Calu3 (cell line): ENCODE measurements at regions of chr2 and their contacts with region 1.

Region 1: DNA sequence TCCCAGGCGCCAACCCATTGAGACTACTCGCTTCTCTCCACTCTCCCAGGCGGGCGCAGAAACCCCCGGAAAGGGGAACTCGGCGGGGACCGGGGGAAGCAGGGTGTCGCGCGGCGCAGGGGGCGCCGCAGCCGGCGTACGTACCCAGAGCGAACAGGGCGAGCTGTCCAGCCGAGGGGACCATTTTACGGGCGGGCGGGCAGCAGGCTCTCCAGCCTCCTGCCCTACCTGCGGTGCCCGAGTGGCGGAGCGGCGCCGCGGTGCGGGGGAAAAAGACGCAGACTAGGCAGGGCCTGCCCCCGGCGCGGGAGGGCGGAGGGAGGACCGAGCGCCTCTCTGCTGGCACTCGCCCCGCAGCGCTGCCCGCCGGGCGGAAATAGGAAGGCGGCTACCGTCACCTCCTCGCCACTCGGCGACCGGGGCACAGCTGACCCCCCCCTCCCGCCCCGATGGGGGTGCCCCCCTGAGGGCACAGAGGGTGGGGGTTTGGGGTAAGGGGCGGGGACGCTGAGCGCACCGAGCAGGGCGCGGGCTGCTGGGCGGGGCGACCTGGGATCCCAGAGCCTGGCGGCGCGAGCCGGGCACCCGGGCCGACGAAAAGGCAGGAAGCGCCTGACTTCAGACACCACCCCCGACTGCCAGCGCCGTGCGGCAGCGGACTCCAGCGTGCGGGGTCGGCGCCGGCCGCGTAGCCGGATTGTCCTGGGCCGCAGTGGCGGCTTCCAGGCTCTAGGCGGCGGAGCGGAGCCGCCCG is at the start of gene TGFA:
- DNase-seq: peak; percentile 96
- H3K4me3 Mint-ChIP-seq: peak within 1 kb of the TSS; percentile 99
- H3K27ac Mint-ChIP-seq: peak within 1 kb of the TSS; percentile 95
- H3K4me1 Mint-ChIP-seq: peaks cover 39% of the 10 kb centered on the region
- H3K27me3 Mint-ChIP-seq: no peaks in the 10 kb centered on the region
- CTCF ChIP-seq: no peak
- total RNA-seq, gene TGFA: 80.0 and 104 TPM in 2 replicates

Region 2: DNA sequence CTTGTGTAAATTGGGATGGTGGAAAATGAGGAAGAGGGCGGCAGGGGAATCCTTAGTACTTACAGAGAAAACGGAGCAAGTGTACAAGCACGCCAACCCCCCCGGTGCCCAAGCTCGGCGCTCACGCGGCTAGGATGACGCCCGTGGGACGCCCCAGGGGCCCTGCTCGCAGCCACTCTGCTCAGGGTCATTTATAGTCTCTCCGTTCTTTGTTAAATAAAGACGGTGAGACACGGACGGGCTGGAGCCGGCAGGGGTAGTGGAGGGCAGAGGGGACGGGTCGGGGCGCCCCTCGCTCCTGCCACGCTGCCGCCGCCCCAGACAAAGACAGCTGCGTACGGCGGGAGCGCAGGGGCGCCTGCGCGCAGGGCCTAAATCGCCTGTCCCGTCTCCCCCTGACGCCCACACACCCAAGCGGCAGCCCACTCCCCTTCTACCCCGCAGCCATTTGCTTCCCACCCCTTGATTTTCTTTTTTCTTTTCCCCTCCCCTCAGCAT is 428.7 kb before region 1 on chr2:
- CTCF ChIA-PET with region 1: no interaction called
- intact Hi-C with region 1: no loop called
- DNase-seq: no peak
- H3K4me3 Mint-ChIP-seq: peak overlapping the region; percentile 81
- H3K27ac Mint-ChIP-seq: peak overlapping the region; percentile 98
- H3K4me1 Mint-ChIP-seq: peaks cover 40% of the 10 kb centered on the region
- H3K27me3 Mint-ChIP-seq: no peaks in the 10 kb centered on the region
- CTCF ChIP-seq: no peak

Region 3: GRCh38 chr2:70509553-70509952 is 44.2 kb before region 1 on chr2:
- CTCF ChIA-PET with region 1: interaction called, 9 read pairs
- intact Hi-C with region 1: loop called (anchors 1 kb)
- DNase-seq: peak; percentile 82
- H3K4me3 Mint-ChIP-seq: peak overlapping the region; percentile 57
- H3K27ac Mint-ChIP-seq: peak overlapping the region; percentile 97
- H3K4me1 Mint-ChIP-seq: peaks cover 72% of the 10 kb centered on the region
- H3K27me3 Mint-ChIP-seq: no peaks in the 10 kb centered on the region
- CTCF ChIP-seq: no peak

Region 4: DNA sequence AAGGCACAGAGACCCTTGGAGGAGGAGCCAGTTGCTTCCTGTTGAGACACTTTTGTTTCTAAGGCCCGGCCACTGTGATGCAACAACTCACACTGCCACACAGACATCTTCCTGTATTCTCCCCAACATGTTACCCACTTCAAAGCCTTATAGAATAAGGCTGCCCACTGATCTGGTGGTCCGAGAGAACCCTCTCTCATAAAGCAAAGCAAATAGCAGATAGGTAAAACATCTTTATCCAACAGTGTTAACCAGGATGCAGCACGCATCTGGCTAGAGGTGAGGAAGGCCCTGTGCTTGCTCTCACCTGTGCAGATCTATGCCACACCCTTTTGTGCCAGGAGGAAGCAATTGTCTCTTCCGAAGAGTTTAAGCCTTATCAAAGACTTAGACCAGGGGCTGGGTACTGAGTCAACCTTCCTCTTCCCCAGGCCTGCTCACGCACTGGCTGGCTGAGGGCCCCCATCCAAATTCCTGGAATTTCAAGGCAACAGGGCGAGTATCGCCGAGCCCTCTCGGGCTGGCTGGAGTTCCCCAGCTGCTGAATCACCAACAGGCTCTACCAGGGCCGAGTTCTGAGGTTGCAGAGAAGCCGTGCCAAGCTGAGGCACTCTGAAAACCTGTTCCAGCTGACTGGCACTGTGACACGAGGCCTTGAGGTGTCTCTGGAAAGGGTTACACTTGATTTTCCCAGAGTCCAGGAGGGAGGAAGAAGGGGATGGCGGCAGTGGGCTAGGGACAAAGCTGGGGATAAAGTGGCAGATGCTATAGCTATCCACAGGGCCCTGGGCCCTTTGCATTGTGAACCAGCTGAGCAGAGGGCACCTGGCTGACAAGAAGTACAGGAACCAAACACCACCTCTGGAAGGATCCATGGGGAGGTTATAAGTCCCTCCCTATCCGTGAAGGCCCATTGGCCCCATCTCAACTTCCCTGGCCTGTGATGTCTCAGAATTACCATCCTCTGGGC is 29.5 kb before region 1 on chr2:
- CTCF ChIA-PET with region 1: interaction called, 6 read pairs
- intact Hi-C with region 1: loop called (anchors 2 kb)
- DNase-seq: peak; percentile 91
- H3K4me3 Mint-ChIP-seq: peak overlapping the region; percentile 54
- H3K27ac Mint-ChIP-seq: peak overlapping the region; percentile 96
- H3K4me1 Mint-ChIP-seq: peaks cover 73% of the 10 kb centered on the region
- H3K27me3 Mint-ChIP-seq: no peaks in the 10 kb centered on the region
- CTCF ChIP-seq: no peak

Region 5: GRCh38 chr2:70534183-70534836 is 19.5 kb before region 1 on chr2:
- CTCF ChIA-PET with region 1: no interaction called
- intact Hi-C with region 1: loop called (anchors 2 kb)
- DNase-seq: no peak
- H3K4me3 Mint-ChIP-seq: peak overlapping the region; percentile 19
- H3K27ac Mint-ChIP-seq: peak overlapping the region; percentile 77
- H3K4me1 Mint-ChIP-seq: peaks cover 69% of the 10 kb centered on the region
- H3K27me3 Mint-ChIP-seq: no peaks in the 10 kb centered on the region
- CTCF ChIP-seq: no peak